ENCODE measurements at regions of chr12 and their contacts with region 1.

Region 1: DNA sequence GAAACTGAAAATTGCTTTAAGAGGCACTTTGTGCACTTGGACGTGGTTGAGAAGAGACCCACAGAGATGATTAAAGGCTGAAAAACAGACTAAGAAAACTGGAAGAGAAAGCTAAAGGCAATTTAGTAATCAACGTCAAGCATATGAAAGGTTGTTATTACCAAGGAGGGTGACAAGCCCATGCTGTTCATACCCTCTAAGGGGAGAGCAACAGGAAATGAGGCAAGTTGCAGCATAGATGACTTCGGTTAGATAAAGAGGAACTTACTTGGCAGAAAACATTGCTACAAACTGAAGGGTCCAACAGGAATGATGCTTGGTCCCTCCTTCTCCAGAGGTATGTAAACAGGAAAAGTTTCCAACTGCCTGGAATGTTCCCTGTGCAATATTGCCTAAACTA is 107.8 kb downstream of the DUSP6 start:
- DNase-seq: peak; percentile 60
- H3K4me3 Mint-ChIP-seq: peak overlapping the region; percentile 50
- H3K27ac Mint-ChIP-seq: peak overlapping the region; percentile 89
- H3K4me1 Mint-ChIP-seq: peaks cover 62% of the 10 kb centered on the region
- H3K27me3 Mint-ChIP-seq: peaks cover 2% of the 10 kb centered on the region

Region 2: GRCh38 chr12:89225808-89226411 is 18.6 kb before region 1 on chr12:
- CTCF ChIA-PET with region 1: interaction called, 24 read pairs
- POLR2A ChIA-PET with region 1: interaction called, 11 read pairs
- DNase-seq: no peak
- H3K4me3 Mint-ChIP-seq: no peak overlapping the region
- H3K27ac Mint-ChIP-seq: peak overlapping the region; percentile 91
- H3K4me1 Mint-ChIP-seq: peaks cover 67% of the 10 kb centered on the region
- H3K27me3 Mint-ChIP-seq: no peaks in the 10 kb centered on the region

Region 3: GRCh38 chr12:89257101-89257739 is 12.7 kb after region 1 on chr12:
- CTCF ChIA-PET with region 1: interaction called, 18 read pairs
- POLR2A ChIA-PET with region 1: interaction called, 4 read pairs
- DNase-seq: no peak
- H3K4me3 Mint-ChIP-seq: no peak overlapping the region
- H3K27ac Mint-ChIP-seq: no peak overlapping the region
- H3K4me1 Mint-ChIP-seq: peaks cover 31% of the 10 kb centered on the region
- H3K27me3 Mint-ChIP-seq: no peaks in the 10 kb centered on the region

Region 4: GRCh38 chr12:89345830-89346740 is 101.5 kb after region 1 on chr12:
- CTCF ChIA-PET with region 1: interaction called, 12 read pairs
- POLR2A ChIA-PET with region 1: interaction called, 9 read pairs
- DNase-seq: peak; percentile 62
- H3K4me3 Mint-ChIP-seq: peak overlapping the region; percentile 65
- H3K27ac Mint-ChIP-seq: peak overlapping the region; percentile 87
- H3K4me1 Mint-ChIP-seq: peaks cover 63% of the 10 kb centered on the region
- H3K27me3 Mint-ChIP-seq: no peaks in the 10 kb centered on the region

Region 5: GRCh38 chr12:89352492-89353187 is 108.1 kb after region 1 on chr12 and contains the start of gene DUSP6:
- CTCF ChIA-PET with region 1: interaction called, 12 read pairs
- POLR2A ChIA-PET with region 1: interaction called, 10 read pairs
- DNase-seq: peak; percentile 96
- H3K4me3 Mint-ChIP-seq: peak within 1 kb of the TSS; percentile 98
- H3K27ac Mint-ChIP-seq: peak within 1 kb of the TSS; percentile 95
- H3K4me1 Mint-ChIP-seq: peaks cover 58% of the 10 kb centered on the region
- H3K27me3 Mint-ChIP-seq: no peaks in the 10 kb centered on the region
- total RNA-seq, gene DUSP6: 48.2 to 48.5 TPM

Measured in activated CD4-positive, alpha-beta T cell treated with anti-CD3 and anti-CD28 coated beads, Interleukin-2, amount 10 ng/mL, durations not matched to agents 7 days and 5 days (primary cell).